ENCODE measurements at regions of chr19 and their contacts with region 1.

Region 1: DNA sequence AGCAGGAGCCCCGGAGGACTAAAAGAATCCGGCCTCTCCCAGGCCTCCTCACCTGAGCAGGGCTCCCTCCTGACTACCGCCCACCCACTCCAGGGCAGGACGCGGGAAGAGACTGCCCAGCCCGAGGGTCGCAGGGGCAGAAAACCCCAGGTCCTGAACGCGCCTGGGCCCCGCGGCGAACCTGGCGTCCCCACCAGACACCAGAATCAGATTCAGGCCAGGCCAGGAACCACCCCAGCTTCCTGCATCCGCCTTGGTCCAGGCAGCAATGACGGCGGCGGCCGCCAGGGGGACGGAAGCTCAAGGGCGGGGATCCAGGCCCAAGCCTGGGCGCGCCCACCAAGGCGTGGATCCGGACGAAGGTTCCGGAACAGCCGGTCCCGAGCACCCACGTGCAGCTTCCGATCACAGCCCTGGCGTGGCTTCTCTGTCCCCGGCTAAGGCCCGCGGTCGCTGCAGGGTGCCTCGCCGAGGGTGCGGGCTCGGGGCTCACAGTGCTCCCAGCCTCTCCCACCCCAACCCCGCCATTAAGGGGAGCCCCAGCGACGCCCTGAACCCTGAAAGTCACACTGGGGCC is 3.6 kb downstream of the LGALS7 start:
- DNase-seq: peak; percentile 46
- H3K4me3 ChIP-seq: no peak overlapping the region
- H3K27ac ChIP-seq: no peak overlapping the region
- H3K4me1 ChIP-seq: no peaks in the 10 kb centered on the region
- CTCF ChIP-seq: peak; percentile 63

Region 2: DNA sequence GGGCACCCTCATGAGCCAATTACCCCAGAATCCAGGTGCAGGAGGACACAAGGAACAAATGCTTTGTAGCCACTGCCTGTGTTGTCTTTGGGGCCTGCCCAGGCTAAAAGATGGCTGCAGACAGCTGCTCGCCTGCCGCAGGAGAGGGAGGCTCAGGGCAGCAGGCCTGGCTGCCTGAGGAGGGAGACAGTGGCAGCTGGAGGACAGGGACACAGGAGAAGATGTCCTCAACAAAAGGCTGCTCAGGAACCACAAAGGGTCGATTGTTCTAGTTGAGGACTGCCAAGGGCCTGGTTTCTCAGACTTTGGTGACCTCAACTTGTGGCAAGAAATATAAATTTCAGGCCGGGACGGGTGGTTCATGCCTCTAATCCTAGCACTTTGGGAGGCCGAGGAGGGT is 122.0 kb after region 1 on chr19:
- CTCF ChIA-PET with region 1: no interaction called
- POLR2A ChIA-PET with region 1: no interaction called
- intact Hi-C with region 1: loop called (anchors 5 kb)
- DNase-seq: no peak
- H3K4me3 ChIP-seq: no peak overlapping the region
- H3K27ac ChIP-seq: no peak overlapping the region
- H3K4me1 ChIP-seq: no peaks in the 10 kb centered on the region
- CTCF ChIP-seq: no peak

Measured in OCI-LY7 (cell line).